ENCODE measurements at regions of chr6 and their contacts with region 1.

Region 1: GRCh38 chr6:130020907-130021629 is 2.7 kb downstream of the L3MBTL3 start:
- DNase-seq: peak; percentile 71
- H3K4me3 Mint-ChIP-seq: peak overlapping the region; percentile 97
- H3K27ac Mint-ChIP-seq: peak overlapping the region; percentile 93
- H3K4me1 Mint-ChIP-seq: peaks cover 34% of the 10 kb centered on the region
- H3K27me3 Mint-ChIP-seq: peaks cover 22% of the 10 kb centered on the region

Region 2: GRCh38 chr6:128520436-128521281 is 1500.4 kb before region 1 on chr6 and contains the start of gene PTPRK:
- intact Hi-C with region 1: loop called (anchors 10 kb)
- DNase-seq: peak; percentile 81
- H3K4me3 Mint-ChIP-seq: peak within 1 kb of the TSS; percentile 93
- H3K27ac Mint-ChIP-seq: peak within 1 kb of the TSS; percentile 86
- H3K4me1 Mint-ChIP-seq: peaks cover 23% of the 10 kb centered on the region
- H3K27me3 Mint-ChIP-seq: peaks cover 76% of the 10 kb centered on the region
- total RNA-seq, gene PTPRK: 3.1 and 3.2 TPM in 2 replicates

Region 3: DNA sequence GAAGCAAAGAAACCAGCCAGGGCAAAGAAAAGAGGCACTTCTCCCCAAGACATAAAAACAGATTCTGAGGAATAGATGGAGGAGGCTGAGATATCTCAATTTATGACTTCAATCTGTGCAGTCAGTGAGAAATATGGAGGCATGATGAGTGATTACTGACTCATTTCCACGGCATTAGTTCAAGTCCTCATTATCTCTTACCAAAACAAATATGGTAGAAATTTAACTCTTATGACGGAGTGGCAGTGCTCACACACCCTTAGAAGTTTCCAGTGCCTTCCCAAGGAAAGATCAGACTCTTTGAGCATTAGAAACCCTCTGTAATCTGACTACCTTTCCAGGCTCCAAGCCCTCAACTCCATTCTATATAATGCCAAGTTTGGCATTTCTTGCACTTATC is 675.2 kb before region 1 on chr6:
- intact Hi-C with region 1: no loop called
- DNase-seq: no peak
- H3K4me3 Mint-ChIP-seq: no peak overlapping the region
- H3K27ac Mint-ChIP-seq: no peak overlapping the region
- H3K4me1 Mint-ChIP-seq: no peaks in the 10 kb centered on the region
- H3K27me3 Mint-ChIP-seq: peaks cover 3% of the 10 kb centered on the region

Region 4: GRCh38 chr6:129598244-129599187 is 422.6 kb before region 1 on chr6:
- intact Hi-C with region 1: loop called (anchors 2 kb)
- DNase-seq: peak; percentile 19
- H3K4me3 Mint-ChIP-seq: no peak overlapping the region
- H3K27ac Mint-ChIP-seq: no peak overlapping the region
- H3K4me1 Mint-ChIP-seq: no peaks in the 10 kb centered on the region
- H3K27me3 Mint-ChIP-seq: no peaks in the 10 kb centered on the region

Region 5: GRCh38 chr6:129748212-129748900 is 272.7 kb before region 1 on chr6:
- intact Hi-C with region 1: loop called (anchors 2 kb)
- DNase-seq: peak; percentile 37
- H3K4me3 Mint-ChIP-seq: peak overlapping the region; percentile 63
- H3K27ac Mint-ChIP-seq: peak overlapping the region; percentile 63
- H3K4me1 Mint-ChIP-seq: peaks cover 46% of the 10 kb centered on the region
- H3K27me3 Mint-ChIP-seq: no peaks in the 10 kb centered on the region

Region 6: DNA sequence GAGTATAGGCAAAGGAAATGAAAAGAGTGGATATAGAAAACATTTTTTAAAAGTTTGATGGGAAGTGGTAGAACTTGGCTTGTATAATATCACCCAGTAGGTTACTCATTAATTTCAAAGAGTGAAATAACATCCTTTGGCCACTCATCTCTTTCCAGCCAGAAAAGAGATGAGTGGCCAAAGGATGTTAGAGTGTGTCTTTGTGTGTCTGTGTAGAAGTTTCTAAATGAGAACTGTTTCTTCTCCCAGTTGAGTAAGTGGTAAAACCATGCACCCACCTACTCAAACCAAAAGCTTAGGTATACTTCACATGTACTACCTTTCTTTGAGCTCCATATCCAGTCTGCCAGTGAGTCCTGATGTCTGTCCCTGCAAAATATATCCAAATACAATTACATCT is 112.2 kb before region 1 on chr6:
- intact Hi-C with region 1: no loop called
- DNase-seq: no peak
- H3K4me3 Mint-ChIP-seq: no peak overlapping the region
- H3K27ac Mint-ChIP-seq: no peak overlapping the region
- H3K4me1 Mint-ChIP-seq: peaks cover 6% of the 10 kb centered on the region
- H3K27me3 Mint-ChIP-seq: peaks cover 15% of the 10 kb centered on the region

Region 7: GRCh38 chr6:129936329-129937165 is 84.5 kb before region 1 on chr6:
- intact Hi-C with region 1: loop called (anchors 1 kb)
- DNase-seq: peak; percentile 11
- H3K4me3 Mint-ChIP-seq: no peak overlapping the region
- H3K27ac Mint-ChIP-seq: no peak overlapping the region
- H3K4me1 Mint-ChIP-seq: no peaks in the 10 kb centered on the region
- H3K27me3 Mint-ChIP-seq: peaks cover 19% of the 10 kb centered on the region

Region 8: GRCh38 chr6:130537447-130537846 is 516.4 kb after region 1 on chr6:
- intact Hi-C with region 1: no loop called
- DNase-seq: no peak
- H3K4me3 Mint-ChIP-seq: no peak overlapping the region
- H3K27ac Mint-ChIP-seq: peak overlapping the region; percentile 26
- H3K4me1 Mint-ChIP-seq: peaks cover 19% of the 10 kb centered on the region
- H3K27me3 Mint-ChIP-seq: no peaks in the 10 kb centered on the region

Region 9: GRCh38 chr6:130843575-130844320 is 822.7 kb after region 1 on chr6:
- intact Hi-C with region 1: loop called (anchors 10 kb)
- DNase-seq: no peak
- H3K4me3 Mint-ChIP-seq: no peak overlapping the region
- H3K27ac Mint-ChIP-seq: no peak overlapping the region
- H3K4me1 Mint-ChIP-seq: peaks cover 8% of the 10 kb centered on the region
- H3K27me3 Mint-ChIP-seq: no peaks in the 10 kb centered on the region

Measured in activated T-helper 1 cell treated with anti-CD3 and anti-CD28 coated beads, Interleukin-12 subunit alpha, Interleukin-12 subunit beta, Interleukin-2, Interleukin-4 antibody, amounts not matched to agents 30 ng/mL and 10 ng/mL and 1 ng/mL, durations not matched to agents 14 hours and 24 hours and 36 hours (primary cell).